ENCODE measurements at regions of chr22 and their contacts with region 1.

Region 1: GRCh38 chr22:41780746-41781505 is 19.6 kb upstream of the CCDC134 start:
- DNase-seq: peak; percentile 89
- CTCF ChIP-seq: no peak

Region 2: DNA sequence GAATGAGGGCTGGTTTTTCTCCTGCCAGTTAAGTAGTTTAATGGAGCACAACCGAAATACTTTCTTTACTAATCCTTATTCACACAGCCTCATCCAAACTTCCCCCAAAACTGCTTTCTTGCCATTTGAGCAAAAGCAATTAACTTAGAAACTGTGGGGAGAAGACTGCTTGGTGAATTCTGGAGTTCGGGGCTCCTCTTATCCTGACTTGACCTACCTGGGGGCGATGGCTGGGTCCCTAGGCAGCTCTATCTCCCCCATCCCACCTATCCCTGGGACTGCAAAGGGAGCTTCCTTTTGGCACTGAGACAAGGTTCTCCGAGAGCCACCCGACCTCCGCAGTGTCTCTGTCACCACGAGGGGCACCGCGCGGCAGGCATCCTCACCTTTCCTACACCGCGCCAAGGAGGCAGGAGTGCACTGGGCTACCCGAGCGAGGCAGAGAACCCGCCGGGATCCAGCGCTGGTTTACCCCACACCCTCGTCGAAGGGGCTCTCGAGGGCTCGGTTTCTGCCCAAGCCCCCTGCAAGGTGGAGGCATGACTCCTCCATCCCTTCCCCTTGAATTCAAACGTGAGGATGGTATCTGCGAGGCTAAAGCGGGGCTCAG is 160.8 kb before region 1 on chr22:
- CTCF ChIA-PET with region 1: no interaction called
- POLR2A ChIA-PET with region 1: no interaction called
- DNase-seq: peak; percentile 28
- CTCF ChIP-seq: no peak

Region 3: GRCh38 chr22:41732096-41732772 is 48.7 kb before region 1 on chr22:
- CTCF ChIA-PET with region 1: no interaction called
- POLR2A ChIA-PET with region 1: no interaction called
- DNase-seq: peak; percentile 47
- CTCF ChIP-seq: no peak

Region 4: DNA sequence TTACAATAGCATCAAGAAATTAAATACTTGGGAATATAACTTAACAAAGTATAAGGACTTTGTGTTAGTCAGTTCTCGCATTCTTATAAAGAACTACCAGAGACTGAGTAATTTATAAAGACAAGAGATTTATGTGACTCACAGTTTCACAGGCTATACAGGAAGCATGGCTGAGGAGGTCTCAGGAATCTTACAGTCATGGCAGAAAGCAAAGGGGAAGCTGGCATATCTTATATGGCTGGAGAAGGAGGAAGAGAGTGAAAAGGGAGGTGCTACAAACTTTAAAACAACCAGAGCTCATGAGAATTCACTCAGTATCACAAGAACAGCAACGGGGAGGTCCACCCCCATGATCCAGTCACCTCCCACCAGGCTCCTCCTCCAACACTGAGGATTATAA is 12.5 kb before region 1 on chr22:
- CTCF ChIA-PET with region 1: interaction called, 19 read pairs
- POLR2A ChIA-PET with region 1: no interaction called
- DNase-seq: no peak
- CTCF ChIP-seq: no peak

Region 5: DNA sequence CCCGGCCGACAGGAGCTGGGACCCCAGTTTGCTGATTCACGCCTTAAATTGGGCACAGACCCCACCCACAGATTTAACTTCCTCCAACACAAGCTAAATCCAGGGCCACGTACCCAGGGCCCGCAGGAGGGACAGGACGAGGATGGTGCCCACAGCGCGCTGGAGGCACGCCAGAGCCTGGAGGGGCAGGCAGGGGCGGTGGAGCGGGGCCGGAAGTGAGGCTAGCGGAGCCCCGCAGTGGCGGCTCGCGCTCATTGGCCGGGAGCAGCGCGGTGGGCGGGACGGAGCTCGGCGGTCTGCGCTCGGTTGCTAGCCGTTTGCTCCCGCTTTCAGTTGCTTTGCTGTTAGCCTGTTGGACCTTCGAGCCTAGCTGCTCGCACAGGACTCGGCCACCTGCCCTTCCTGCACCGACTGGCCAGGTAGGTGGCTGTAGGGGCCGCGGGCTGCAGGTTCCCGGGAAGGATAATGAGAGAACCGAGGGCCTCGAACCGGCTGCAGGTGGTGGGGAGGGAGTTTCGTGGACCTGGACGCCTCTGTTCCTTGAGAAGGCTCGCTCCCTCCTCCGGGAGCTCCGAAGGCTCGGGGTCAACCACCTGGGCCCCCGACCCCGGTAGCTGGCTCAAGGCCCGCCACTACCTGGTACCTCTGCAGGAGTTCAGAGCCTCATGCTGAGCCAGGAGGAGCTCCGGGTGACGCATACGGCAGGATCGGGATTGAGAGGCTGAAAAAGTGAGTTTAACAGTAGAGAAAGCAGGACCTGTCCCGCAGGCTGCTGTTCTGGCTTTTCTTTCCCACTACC is 19.6 kb after region 1 on chr22 and contains the start of gene CCDC134:
- CTCF ChIA-PET with region 1: interaction called, 43 read pairs
- POLR2A ChIA-PET with region 1: interaction called, 10 read pairs
- DNase-seq: peak; percentile 97
- CTCF ChIP-seq: no peak

Region 6: DNA sequence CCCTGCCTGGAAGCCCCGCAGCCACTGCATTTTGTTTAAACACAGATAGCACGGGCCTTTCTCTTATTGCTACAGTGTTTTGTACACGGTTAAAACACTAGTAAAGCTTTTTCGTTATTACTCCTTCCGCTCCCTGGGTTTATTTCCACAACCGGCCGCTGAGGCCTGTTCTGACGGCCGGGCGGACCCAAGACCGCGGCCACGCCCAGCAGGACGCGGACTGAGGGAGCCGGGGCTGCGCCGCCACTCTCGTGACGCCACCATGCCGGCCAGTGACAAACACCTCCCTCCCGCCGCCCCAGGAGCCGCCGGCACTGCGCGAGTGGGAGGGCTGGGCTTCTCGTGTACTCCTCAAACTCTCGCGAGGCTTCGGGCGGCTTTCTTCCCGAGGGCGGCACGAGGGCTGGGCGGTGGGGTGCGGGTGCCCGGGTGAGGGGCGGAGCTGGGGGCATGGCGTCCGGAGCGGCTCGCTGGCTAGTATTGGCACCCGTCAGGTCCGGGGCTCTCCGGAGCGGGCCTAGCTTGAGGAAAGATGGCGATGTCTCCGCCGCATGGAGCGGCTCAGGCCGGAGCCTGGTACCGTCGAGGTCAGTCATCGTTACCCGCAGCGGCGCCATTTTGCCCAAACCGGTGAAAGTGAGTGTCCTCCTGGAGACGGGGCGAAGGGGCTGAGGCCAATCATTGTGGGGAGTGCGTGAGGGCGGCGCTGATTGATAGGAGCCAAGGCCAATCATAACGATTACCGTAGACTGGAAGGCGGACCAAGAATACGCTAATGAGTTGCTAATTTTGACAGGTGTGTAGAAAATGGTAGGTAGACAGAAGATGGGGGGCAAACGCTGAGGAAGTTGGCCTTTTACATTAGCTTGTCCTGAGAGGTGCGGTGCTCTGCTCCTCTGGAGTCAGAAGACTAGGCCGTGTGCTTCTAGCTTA is 298.7 kb after region 1 on chr22 and contains the start of gene SMDT1:
- CTCF ChIA-PET with region 1: no interaction called
- POLR2A ChIA-PET with region 1: interaction called, 11 read pairs
- DNase-seq: peak; percentile 98
- CTCF ChIP-seq: no peak

Measured in GM10248 (cell line).